ENCODE measurements at regions of chr3 and their contacts with region 1.

Region 1: DNA sequence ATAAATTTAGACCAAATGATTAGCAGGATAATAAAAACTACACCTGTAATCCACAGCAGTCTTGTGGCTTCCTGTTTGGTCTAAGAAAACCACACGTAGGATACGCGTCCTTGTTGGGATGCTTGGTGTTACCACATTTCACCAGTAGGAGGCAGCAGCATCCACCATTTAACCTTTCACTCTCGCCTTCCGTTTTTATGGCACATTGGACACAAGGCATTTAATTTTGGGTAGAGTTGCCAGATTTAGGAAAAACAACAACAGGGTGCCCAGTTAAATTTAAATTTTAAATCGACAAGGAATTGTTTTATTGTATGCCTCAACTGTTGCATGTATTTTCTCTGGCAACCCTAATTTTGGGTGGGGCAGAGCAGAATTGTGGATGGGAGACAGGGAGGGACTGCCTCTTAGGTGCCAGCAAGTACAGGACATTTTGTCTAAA is 6.3 kb downstream of the LRRC31 start:
- DNase-seq: peak; percentile 54 to 71 (median 66)
- H3K4me3 ChIP-seq: no peak overlapping the region
- H3K4me3 Mint-ChIP-seq: no peak overlapping the region
- H3K27ac ChIP-seq: no peak overlapping the region
- H3K27ac Mint-ChIP-seq: peak overlapping the region in 2 of 7 donors; percentile 23 to 38
- H3K4me1 ChIP-seq: peaks cover 7% of the 10 kb centered on the region
- H3K4me1 Mint-ChIP-seq: peaks cover 4 to 15% (median 4%) of the 10 kb centered on the region in 4 donors
- H3K27me3 ChIP-seq: no peaks in the 10 kb centered on the region
- H3K27me3 Mint-ChIP-seq: peaks cover 3 to 9% of the 10 kb centered on the region in 2 donors

Region 2: DNA sequence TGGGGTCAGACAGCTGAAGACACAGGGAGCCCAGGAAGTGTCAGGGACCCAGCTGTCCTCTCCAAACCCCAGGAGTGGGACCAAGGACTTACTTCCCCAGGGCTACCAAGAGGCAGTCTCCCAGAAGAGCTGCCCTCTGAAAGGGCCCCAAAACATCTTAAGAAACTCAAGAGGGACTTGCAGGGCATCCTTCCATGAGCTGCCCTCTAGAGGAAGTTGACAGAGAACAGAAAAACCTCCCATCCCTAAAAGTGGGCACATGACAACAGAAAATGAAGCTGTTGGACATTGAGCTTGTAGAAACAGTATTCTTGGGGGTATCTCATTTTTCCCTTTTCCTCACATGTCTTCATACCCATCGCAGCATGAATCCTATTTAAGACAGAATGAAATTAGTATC is 258.9 kb before region 1 on chr3:
- CTCF ChIA-PET with region 1: no interaction called
- POLR2A ChIA-PET with region 1: no interaction called
- intact Hi-C with region 1: no loop called
- DNase-seq: no peak
- H3K4me3 ChIP-seq: no peak overlapping the region
- H3K4me3 Mint-ChIP-seq: no peak overlapping the region
- H3K27ac ChIP-seq: no peak overlapping the region
- H3K27ac Mint-ChIP-seq: no peak overlapping the region
- H3K4me1 ChIP-seq: no peaks in the 10 kb centered on the region
- H3K4me1 Mint-ChIP-seq: no peaks in the 10 kb centered on the region
- H3K27me3 ChIP-seq: no peaks in the 10 kb centered on the region
- H3K27me3 Mint-ChIP-seq: peaks cover 0 to 9% of the 10 kb centered on the region in 2 donors

Region 3: GRCh38 chr3:169879845-169880575 is 16.5 kb after region 1 on chr3:
- CTCF ChIA-PET with region 1: interaction called, 13 read pairs
- POLR2A ChIA-PET with region 1: no interaction called
- intact Hi-C with region 1: no loop called
- DNase-seq: no peak
- H3K4me3 ChIP-seq: no peak overlapping the region
- H3K4me3 Mint-ChIP-seq: no peak overlapping the region
- H3K27ac ChIP-seq: no peak overlapping the region
- H3K27ac Mint-ChIP-seq: no peak overlapping the region
- H3K4me1 ChIP-seq: no peaks in the 10 kb centered on the region
- H3K4me1 Mint-ChIP-seq: peaks cover 0 to 4% (median 1%) of the 10 kb centered on the region in 4 donors
- H3K27me3 ChIP-seq: no peaks in the 10 kb centered on the region
- H3K27me3 Mint-ChIP-seq: no peaks in the 10 kb centered on the region

Region 4: GRCh38 chr3:170054204-170054603 is 190.7 kb after region 1 on chr3:
- CTCF ChIA-PET with region 1: interaction called, 4 read pairs
- POLR2A ChIA-PET with region 1: no interaction called
- intact Hi-C with region 1: loop called (anchors 1 kb)
- DNase-seq: peak in 4 of 5 donors; percentile 12 to 18 (median 16)
- H3K4me3 ChIP-seq: no peak overlapping the region
- H3K4me3 Mint-ChIP-seq: no peak overlapping the region
- H3K27ac ChIP-seq: no peak overlapping the region
- H3K27ac Mint-ChIP-seq: no peak overlapping the region
- H3K4me1 ChIP-seq: peaks cover 9% of the 10 kb centered on the region
- H3K4me1 Mint-ChIP-seq: peaks cover 9 to 18% (median 15%) of the 10 kb centered on the region in 4 donors
- H3K27me3 ChIP-seq: no peaks in the 10 kb centered on the region
- H3K27me3 Mint-ChIP-seq: no peaks in the 10 kb centered on the region

Region 5: GRCh38 chr3:170098753-170099152 is 235.3 kb after region 1 on chr3:
- CTCF ChIA-PET with region 1: interaction called, 11 read pairs
- POLR2A ChIA-PET with region 1: no interaction called
- intact Hi-C with region 1: loop called (anchors 10 kb)
- DNase-seq: no peak
- H3K4me3 ChIP-seq: no peak overlapping the region
- H3K4me3 Mint-ChIP-seq: no peak overlapping the region
- H3K27ac ChIP-seq: no peak overlapping the region
- H3K27ac Mint-ChIP-seq: peak overlapping the region in 4 of 7 donors; percentile 5 to 79 (median 34)
- H3K4me1 ChIP-seq: no peaks in the 10 kb centered on the region
- H3K4me1 Mint-ChIP-seq: peaks cover 0 to 19% (median 2%) of the 10 kb centered on the region in 4 donors
- H3K27me3 ChIP-seq: no peaks in the 10 kb centered on the region
- H3K27me3 Mint-ChIP-seq: no peaks in the 10 kb centered on the region

Region 6: GRCh38 chr3:170689893-170690660 is 826.6 kb after region 1 on chr3:
- CTCF ChIA-PET with region 1: no interaction called
- POLR2A ChIA-PET with region 1: no interaction called
- intact Hi-C with region 1: loop called (anchors 2 kb)
- DNase-seq: peak in 4 of 5 donors; percentile 1 to 13 (median 7)
- H3K4me3 ChIP-seq: no peak overlapping the region
- H3K4me3 Mint-ChIP-seq: no peak overlapping the region
- H3K27ac ChIP-seq: no peak overlapping the region
- H3K27ac Mint-ChIP-seq: no peak overlapping the region
- H3K4me1 ChIP-seq: no peaks in the 10 kb centered on the region
- H3K4me1 Mint-ChIP-seq: no peaks in the 10 kb centered on the region
- H3K27me3 ChIP-seq: no peaks in the 10 kb centered on the region
- H3K27me3 Mint-ChIP-seq: no peaks in the 10 kb centered on the region